Vagina (tissue), 2 donors: ENCODE measurements at regions of chr17 and their contacts with region 1.

Region 1: GRCh38 chr17:59427425-59427921 is 96.0 kb downstream of the YPEL2 start:
- DNase-seq: no peak
- H3K4me3 ChIP-seq: no peak overlapping the region
- H3K27ac ChIP-seq: peak overlapping the region; percentile 83
- H3K4me1 ChIP-seq: peaks cover 65% of the 10 kb centered on the region
- H3K27me3 ChIP-seq: no peaks in the 10 kb centered on the region
- CTCF ChIP-seq: no peak
- POLR2A ChIP-seq: no peak

Region 2: DNA sequence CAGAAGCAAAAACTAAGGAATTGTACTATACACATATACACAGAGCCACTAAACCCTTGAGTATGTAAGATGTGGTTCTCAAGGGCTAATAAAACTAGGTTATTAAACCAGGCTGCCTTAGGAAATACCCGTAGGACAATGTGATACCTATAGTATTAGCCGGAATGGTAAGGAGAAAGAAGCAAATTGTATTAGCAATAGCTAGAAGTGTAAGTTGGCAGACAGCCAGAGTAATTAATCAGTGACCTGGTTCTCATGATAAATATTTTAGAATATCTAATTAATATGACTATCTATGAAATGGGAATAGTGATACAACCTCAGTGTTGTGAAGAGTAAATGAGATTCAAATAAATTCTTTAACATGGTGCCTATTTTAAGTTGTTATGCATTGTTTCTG is 188.6 kb before region 1 on chr17:
- intact Hi-C with region 1: no loop called
- DNase-seq: no peak
- H3K4me3 ChIP-seq: no peak overlapping the region
- H3K27ac ChIP-seq: no peak overlapping the region
- H3K4me1 ChIP-seq: no peaks in the 10 kb centered on the region
- H3K27me3 ChIP-seq: no peaks in the 10 kb centered on the region
- CTCF ChIP-seq: no peak
- POLR2A ChIP-seq: no peak

Region 3: DNA sequence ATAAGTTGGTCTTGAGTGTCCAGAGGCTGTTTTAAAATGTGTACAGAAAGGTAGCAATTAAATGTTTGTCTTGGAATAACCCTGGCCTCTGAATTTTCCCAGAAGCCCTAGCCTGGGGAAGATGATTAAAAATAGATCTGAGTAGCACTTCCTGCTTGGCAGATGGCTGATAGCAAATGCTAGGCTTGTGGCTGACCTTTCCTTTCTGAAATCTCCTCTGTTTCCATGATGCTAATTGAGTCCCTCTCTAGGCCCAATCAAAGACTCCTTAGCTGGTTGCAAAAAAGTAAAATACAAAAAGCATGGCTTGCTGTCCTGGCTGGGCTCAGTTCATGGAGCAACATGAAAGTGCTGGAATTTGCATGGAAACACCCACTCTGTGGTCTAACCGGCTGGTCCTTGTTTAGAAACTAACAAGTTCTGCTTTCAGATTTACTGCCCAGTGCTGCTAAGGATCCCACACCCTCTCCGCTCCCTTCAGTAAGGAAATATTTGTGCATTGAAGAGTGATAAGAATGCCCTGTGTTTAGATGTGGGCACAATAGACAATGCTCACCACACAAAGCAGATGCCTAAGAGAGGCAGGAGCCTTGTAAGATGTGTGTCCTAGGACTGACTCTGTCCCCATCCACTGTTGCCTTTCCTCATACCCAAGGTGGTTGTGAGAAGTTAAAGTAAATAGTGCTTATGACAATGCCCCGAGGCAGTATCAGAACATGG is 55.2 kb before region 1 on chr17:
- intact Hi-C with region 1: loop called (anchors 10 kb)
- DNase-seq: no peak
- H3K4me3 ChIP-seq: peak overlapping the region in 1 of 2 donors; percentile 27
- H3K27ac ChIP-seq: peak overlapping the region; percentile 87
- H3K4me1 ChIP-seq: peaks cover 99% of the 10 kb centered on the region
- H3K27me3 ChIP-seq: no peaks in the 10 kb centered on the region
- CTCF ChIP-seq: no peak
- POLR2A ChIP-seq: no peak